Activated CD4-positive, alpha-beta memory T cell treated with anti-CD3 and anti-CD28 coated beads, Interleukin-2, amount 10 ng/mL, durations not matched to agents 7 days and 5 days (primary cell): ENCODE measurements at regions of chr10 and their contacts with region 1.

Region 1: DNA sequence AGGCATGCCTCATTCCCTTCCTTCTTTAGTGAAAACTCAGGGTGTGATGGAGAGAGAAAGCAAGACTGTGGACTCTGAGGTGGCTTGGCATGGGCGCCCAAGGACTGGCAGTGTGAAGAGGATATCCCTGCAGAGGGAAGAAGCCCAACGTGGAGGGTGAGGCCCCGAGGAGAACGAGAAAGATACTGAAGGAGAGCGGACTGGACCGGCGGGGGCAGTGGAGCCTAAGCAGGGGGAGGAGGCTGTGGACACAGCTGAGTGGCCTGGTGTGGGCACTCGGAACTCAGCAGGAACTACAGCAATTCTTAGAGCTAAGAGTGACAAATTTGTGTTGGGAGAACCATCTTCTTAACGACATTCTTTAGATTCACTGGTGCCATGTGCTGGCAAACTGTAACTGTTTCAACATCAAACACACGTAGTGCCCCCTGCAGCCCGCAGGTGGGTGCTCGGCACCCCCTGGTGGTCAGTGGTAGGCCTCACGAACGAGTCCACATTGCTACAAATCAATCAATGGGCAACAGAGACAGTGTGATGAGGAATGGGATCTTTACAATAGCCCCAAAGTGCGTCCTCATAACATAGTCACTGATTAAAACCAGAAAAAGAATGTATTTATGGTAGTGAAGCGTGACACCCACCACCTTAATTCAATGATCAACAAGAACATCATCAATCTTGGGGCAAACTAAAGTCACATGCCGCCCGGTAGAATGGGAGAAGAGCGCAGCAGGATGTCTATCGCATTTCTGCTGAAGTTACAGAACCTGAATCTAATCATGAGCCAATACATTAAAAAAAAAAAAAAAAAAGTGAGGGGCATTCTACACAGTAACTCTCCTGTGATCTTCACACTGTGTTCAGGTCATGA is 2.0 kb upstream of the SFTPA1 start:
- DNase-seq: peak; percentile 60
- H3K4me3 Mint-ChIP-seq: no peak overlapping the region
- H3K27ac Mint-ChIP-seq: no peak overlapping the region
- H3K4me1 Mint-ChIP-seq: no peaks in the 10 kb centered on the region
- H3K27me3 Mint-ChIP-seq: peaks cover 4% of the 10 kb centered on the region

Region 2: DNA sequence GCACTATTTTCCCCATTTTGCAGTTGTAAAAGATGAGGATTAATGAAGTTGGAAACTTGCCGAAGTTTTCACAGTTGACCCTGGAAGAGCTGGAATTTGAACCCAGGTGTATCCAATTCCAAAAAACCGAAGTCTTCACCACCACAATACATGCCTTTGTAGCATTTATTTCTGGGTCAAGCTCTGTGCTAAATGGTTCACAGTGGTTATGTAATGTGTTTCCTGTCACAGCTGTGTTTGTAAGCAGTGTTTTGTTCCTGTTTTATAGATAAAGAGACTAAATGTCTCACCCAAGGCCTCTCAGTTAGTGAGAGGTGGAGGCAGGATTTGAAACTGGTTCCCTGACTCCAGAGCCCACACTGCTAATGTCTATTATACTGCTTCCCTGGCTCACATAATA is 66.1 kb before region 1 on chr10:
- CTCF ChIA-PET with region 1: interaction called, 11 read pairs
- POLR2A ChIA-PET with region 1: no interaction called
- DNase-seq: no peak
- H3K4me3 Mint-ChIP-seq: no peak overlapping the region
- H3K27ac Mint-ChIP-seq: no peak overlapping the region
- H3K4me1 Mint-ChIP-seq: peaks cover 36% of the 10 kb centered on the region
- H3K27me3 Mint-ChIP-seq: no peaks in the 10 kb centered on the region

Region 3: GRCh38 chr10:79562135-79562756 is 46.5 kb before region 1 on chr10:
- CTCF ChIA-PET with region 1: interaction called, 10 read pairs
- POLR2A ChIA-PET with region 1: no interaction called
- DNase-seq: peak; percentile 73
- H3K4me3 Mint-ChIP-seq: no peak overlapping the region
- H3K27ac Mint-ChIP-seq: no peak overlapping the region
- H3K4me1 Mint-ChIP-seq: peaks cover 4% of the 10 kb centered on the region
- H3K27me3 Mint-ChIP-seq: peaks cover 20% of the 10 kb centered on the region

Region 4: GRCh38 chr10:79588800-79589199 is 19.9 kb before region 1 on chr10:
- CTCF ChIA-PET with region 1: no interaction called
- POLR2A ChIA-PET with region 1: no interaction called
- DNase-seq: no peak
- H3K4me3 Mint-ChIP-seq: no peak overlapping the region
- H3K27ac Mint-ChIP-seq: no peak overlapping the region
- H3K4me1 Mint-ChIP-seq: peaks cover 1% of the 10 kb centered on the region
- H3K27me3 Mint-ChIP-seq: peaks cover 38% of the 10 kb centered on the region